Activated CD8-positive, alpha-beta T cell treated with anti-CD3 and anti-CD28 coated beads, Interleukin-2, amount 10 ng/mL, durations not matched to agents 7 days and 5 days (primary cell): ENCODE measurements at regions of chr7 and their contacts with region 1.

Region 1: GRCh38 chr7:64665980-64666662 is at the start of gene ZNF107:
- DNase-seq: peak; percentile 93
- ATAC-seq: peak; percentile 99
- H3K4me3 Mint-ChIP-seq: peak within 1 kb of the TSS; percentile 96
- H3K27ac Mint-ChIP-seq: peak within 1 kb of the TSS; percentile 98
- H3K4me1 Mint-ChIP-seq: peaks cover 25% of the 10 kb centered on the region
- H3K27me3 Mint-ChIP-seq: no peaks in the 10 kb centered on the region
- total RNA-seq, gene ZNF107: 20.2 to 21.7 TPM

Region 2: DNA sequence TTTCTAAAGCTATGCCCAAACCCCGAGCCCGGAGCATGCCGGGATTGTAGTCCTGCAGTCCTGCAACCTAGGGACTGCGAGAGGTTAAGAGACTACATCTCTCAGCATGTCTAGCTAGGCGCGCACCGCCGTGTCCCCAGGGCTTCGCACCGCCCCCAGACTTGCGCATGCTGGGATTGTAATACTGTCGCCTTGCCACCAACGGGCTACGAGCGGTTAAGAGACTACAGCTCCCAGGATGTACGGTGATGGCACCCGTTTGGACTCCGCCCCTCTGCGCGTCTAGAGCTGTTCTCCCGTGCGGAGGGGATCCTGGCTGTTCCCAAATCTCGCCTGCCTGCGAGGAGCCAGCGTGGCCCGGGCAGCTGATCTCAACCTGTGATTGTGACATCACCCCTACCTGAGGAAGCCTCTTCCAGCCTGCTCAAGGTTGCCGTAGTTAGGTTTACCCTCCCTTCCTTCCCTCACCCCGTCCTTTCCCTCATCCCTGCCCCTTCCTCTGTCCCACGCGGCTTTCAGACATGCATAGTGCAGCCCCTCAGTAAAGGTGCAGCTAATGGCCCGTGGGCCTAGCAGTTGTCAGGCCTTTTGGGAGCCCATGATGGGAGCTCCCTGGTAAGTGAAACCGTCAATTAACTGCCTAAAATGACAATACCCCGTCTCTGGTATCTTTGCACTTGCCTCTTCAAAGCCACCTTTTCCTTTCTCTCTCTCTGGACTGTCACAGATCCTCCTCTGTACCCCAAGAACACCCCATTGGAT is 358.7 kb before region 1 on chr7:
- CTCF ChIA-PET with region 1: no interaction called
- POLR2A ChIA-PET with region 1: interaction called, 11 read pairs
- DNase-seq: peak; percentile 96
- ATAC-seq: peak; percentile 100
- H3K4me3 Mint-ChIP-seq: peak overlapping the region; percentile 90
- H3K27ac Mint-ChIP-seq: peak overlapping the region; percentile 98
- H3K4me1 Mint-ChIP-seq: peaks cover 21% of the 10 kb centered on the region
- H3K27me3 Mint-ChIP-seq: no peaks in the 10 kb centered on the region

Region 3: DNA sequence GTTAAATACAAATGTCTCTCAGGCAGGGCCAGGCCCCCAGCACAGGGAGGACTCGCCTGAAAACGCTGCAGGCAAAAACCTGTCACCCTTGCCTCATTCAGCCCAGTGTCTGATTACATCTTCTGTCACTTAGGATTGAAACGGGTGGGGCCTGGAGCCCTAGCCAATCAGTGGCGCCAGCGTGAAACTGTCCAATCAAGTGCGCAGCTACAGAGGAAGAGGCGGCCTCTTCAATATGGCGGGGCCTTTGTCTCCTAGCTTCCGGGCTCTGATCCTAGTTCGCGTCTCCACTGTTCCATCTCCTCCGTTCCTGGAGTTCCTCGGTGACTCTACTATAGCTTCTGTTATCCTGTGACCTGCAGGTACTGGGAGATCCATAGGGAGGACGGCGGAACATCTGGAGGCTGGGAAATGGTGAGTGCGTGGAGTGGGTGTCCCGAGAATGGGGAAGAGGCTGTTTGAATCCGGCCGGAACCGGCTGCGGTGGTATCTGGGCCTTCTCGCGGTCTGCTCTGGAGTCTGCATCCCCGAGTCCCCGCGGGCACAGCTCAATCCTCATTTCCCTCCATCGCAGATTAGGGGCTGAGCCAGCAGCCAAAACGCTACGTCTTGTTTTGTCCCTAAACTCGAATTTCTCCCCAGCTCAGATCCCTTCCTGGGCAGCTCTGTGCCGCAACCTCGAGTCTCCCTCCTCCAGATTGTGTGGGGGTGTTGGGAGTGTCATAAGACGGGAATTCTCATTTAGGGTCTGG is 352.2 kb before region 1 on chr7 and contains the start of gene ZNF736:
- CTCF ChIA-PET with region 1: no interaction called
- POLR2A ChIA-PET with region 1: interaction called, 14 read pairs
- DNase-seq: peak; percentile 93
- ATAC-seq: peak; percentile 100
- H3K4me3 Mint-ChIP-seq: peak within 1 kb of the TSS; percentile 98
- H3K27ac Mint-ChIP-seq: peak within 1 kb of the TSS; percentile 99
- H3K4me1 Mint-ChIP-seq: peaks cover 33% of the 10 kb centered on the region
- H3K27me3 Mint-ChIP-seq: no peaks in the 10 kb centered on the region
- total RNA-seq, gene ZNF736: 26.0 to 27.4 TPM

Region 4: DNA sequence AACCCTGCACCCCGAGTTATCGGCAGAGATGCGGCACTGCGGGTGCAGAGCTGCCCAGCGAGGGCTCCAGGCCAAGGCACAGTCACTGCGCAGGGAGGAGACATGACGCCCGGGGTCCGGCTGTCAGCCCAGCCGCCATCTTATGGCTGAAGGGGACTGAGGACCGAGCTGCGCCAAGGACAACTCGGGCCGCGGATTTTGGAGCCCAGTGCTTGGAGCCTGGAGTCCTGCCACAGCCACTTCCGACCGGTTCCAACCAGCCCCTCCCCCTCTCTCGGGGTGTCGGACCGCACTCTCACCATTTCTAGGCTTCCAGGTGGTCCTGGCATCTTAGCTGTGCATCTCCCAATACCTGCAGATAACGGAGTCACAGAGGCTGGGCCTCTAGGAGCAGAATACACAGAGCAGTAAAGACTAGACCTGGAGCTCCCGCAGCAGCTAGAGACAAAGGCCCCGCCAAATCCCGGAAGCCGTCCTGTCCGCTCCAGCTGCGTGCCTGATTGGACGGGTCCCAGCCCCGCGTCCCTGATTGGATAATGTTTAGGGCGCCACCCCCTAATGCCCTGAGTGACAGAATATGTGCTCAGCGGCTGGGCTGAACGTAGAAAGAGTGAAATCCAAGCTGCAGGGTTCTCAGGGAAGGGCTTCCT is 103.4 kb before region 1 on chr7 and contains the start of gene ZNF680:
- CTCF ChIA-PET with region 1: no interaction called
- POLR2A ChIA-PET with region 1: interaction called, 22 read pairs
- DNase-seq: peak; percentile 94
- ATAC-seq: peak; percentile 100
- H3K4me3 Mint-ChIP-seq: peak within 1 kb of the TSS; percentile 100
- H3K27ac Mint-ChIP-seq: peak within 1 kb of the TSS; percentile 100
- H3K4me1 Mint-ChIP-seq: peaks cover 24% of the 10 kb centered on the region
- H3K27me3 Mint-ChIP-seq: no peaks in the 10 kb centered on the region
- total RNA-seq, gene ZNF680: 12.9 to 13.1 TPM

Region 5: GRCh38 chr7:64794171-64794844 is 128.2 kb after region 1 on chr7 and contains the start of gene ZNF138:
- CTCF ChIA-PET with region 1: no interaction called
- POLR2A ChIA-PET with region 1: interaction called, 18 read pairs
- DNase-seq: peak; percentile 97
- ATAC-seq: peak; percentile 100
- H3K4me3 Mint-ChIP-seq: peak within 1 kb of the TSS; percentile 98
- H3K27ac Mint-ChIP-seq: peak within 1 kb of the TSS; percentile 100
- H3K4me1 Mint-ChIP-seq: peaks cover 20% of the 10 kb centered on the region
- H3K27me3 Mint-ChIP-seq: no peaks in the 10 kb centered on the region
- total RNA-seq, gene ZNF138: 10.9 to 11.7 TPM

Region 6: DNA sequence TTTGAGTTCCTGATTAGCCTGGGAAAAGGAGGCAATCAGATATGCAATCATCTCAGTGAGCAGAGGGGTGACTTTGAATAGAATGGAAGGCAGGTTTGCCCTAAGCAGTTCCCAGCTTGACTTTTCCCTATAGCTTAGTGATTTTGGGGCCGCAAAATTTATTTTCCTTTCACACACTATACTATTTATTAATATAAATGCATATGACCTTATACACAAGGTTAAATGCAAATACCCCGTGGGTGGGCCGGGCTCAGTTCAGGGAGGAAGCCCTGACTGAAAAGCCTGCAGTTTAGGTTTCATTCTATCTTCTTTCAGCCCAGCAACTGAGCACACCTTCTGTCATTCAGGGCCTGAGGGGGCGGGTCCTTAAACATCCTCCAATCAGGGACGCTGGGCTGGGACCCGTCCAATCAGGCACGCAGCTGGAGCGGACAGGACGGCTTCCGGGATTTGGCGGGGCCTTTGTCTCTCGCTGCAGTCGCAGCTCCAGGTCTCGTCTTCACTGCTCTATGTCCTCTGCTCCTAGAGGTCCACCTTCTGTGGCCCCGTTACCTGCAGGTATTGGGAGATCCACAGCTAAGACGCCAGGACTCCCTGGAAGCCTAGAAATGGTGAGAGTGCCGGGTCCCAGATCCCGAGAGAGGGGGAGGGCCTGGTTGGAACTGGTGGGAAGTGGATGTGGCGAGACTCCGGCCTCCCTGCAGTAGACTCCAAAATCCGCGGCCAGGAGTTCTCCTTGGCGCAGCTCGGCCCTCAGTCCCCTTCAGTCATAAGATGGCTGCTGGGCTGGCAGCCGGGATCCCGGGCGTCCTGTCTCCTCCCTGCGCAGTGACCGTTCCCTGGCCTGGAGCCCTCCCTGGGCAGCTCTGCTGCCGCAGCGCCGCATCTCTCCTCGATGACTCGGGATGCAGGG is 236.9 kb after region 1 on chr7 and contains the start of gene ZNF273:
- CTCF ChIA-PET with region 1: no interaction called
- POLR2A ChIA-PET with region 1: interaction called, 17 read pairs
- DNase-seq: peak; percentile 96
- ATAC-seq: peak; percentile 100
- H3K4me3 Mint-ChIP-seq: peak within 1 kb of the TSS; percentile 97
- H3K27ac Mint-ChIP-seq: peak within 1 kb of the TSS; percentile 95
- H3K4me1 Mint-ChIP-seq: peaks cover 44% of the 10 kb centered on the region
- H3K27me3 Mint-ChIP-seq: no peaks in the 10 kb centered on the region
- total RNA-seq, gene ZNF273: 10.6 to 11.8 TPM

Region 7: GRCh38 chr7:65006094-65006992 is 340.2 kb after region 1 on chr7 and contains the start of gene ERV3-1:
- CTCF ChIA-PET with region 1: no interaction called
- POLR2A ChIA-PET with region 1: interaction called, 17 read pairs
- DNase-seq: peak; percentile 97
- ATAC-seq: peak; percentile 100
- H3K4me3 Mint-ChIP-seq: peak within 1 kb of the TSS; percentile 93
- H3K27ac Mint-ChIP-seq: peak within 1 kb of the TSS; percentile 93
- H3K4me1 Mint-ChIP-seq: peaks cover 27% of the 10 kb centered on the region
- H3K27me3 Mint-ChIP-seq: no peaks in the 10 kb centered on the region
- total RNA-seq, gene ERV3-1: 12.5 to 14.8 TPM